ENCODE measurements at regions of chr20 and their contacts with region 1.

Region 1: DNA sequence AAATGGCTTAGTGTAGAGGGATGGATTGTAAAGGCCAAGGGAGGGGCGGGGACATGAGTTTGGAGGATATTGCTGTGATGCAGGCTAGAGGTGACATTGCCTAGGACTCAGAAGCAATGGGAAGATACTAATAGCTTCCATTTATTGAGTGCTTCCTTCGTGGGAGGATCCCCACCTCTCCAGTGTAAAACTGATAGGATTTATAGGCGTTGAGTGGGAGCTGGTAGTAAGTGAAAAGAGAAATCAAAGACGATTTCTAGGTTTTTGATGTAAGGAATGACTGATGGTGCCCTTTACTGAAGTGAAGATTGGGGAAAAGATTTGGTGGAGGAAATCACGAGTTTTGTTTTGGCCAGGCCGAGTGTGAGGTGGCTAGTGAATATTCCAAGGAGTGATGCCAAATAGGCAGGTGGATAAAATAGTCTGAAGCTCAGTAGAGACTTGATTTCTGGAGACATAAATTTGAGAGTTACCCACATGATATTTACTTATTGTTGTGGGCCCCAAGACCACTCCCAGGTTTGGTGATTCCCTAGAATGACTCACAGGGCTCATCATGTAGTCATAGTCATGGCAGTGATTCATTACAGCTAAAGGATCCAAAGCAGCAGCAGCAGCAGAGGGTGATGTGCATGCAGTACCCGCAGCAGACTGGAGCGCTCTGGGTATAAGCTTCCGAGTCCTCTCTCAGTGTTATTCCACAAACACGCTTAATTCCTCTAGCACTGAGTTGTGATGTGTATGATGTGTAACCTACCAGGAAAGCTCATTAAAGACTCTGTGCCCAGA is 10.2 kb downstream of the RPRD1B start:
- DNase-seq: no peak
- H3K4me3 ChIP-seq: no peak overlapping the region
- H3K27ac ChIP-seq: no peak overlapping the region
- H3K27me3 ChIP-seq: no peaks in the 10 kb centered on the region
- CTCF ChIP-seq: no peak

Region 2: DNA sequence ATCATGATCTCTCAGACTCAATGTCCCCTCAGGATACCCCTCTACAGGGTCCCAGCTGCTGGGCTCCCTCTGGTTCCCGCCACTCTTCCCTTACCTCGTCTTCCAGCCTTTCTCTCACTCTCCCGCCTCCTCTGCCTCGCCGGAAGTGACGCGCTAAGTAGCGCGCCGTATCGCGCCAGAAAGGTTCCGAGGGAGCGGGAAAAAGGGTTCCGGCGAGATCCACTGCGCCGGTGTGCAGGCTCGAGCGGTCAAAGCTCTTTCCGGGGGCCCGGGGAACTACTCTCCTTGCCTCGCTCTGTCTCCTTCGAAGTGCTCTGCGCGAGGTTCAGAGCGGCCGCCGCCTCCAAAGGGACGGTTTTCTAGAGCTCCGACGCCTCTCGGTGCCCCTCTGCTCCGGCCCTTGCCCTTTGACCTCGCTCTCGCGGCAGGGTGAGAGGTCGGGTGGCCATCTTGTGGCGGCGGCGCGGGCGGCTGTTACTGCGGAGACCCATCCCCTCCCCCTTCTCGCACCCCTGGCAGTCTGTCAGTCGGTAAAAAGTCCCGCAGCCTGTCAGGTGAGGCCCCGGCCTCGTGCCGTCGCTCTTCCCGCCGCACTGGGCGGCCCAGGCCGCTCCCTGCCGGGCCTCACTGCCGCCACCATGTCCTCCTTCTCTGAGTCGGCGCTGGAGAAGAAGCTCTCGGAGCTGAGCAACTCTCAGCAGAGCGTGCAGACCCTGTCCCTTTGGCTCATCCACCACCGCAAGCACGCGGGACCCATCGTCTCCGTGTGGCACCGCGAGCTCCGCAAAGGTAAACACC is 10.2 kb before region 1 on chr20 and contains the starts of genes RPRD1B and TTI1:
- CTCF ChIA-PET with region 1: interaction called, 6 read pairs
- POLR2A ChIA-PET with region 1: interaction called, 10 read pairs
- DNase-seq: peak; percentile 54
- H3K4me3 ChIP-seq: peak within 1 kb of the TSS; percentile 95
- H3K27ac ChIP-seq: peak within 1 kb of the TSS; percentile 85
- H3K27me3 ChIP-seq: no peaks in the 10 kb centered on the region
- CTCF ChIP-seq: 0 out of 2 replicates have a peak, but pooled peaks have one; percentile 12
- polyA plus RNA-seq, gene RPRD1B: 21.5 and 23.7 TPM in 2 replicates
- polyA plus RNA-seq, gene TTI1: 14.7 and 15.1 TPM in 2 replicates

Region 3: DNA sequence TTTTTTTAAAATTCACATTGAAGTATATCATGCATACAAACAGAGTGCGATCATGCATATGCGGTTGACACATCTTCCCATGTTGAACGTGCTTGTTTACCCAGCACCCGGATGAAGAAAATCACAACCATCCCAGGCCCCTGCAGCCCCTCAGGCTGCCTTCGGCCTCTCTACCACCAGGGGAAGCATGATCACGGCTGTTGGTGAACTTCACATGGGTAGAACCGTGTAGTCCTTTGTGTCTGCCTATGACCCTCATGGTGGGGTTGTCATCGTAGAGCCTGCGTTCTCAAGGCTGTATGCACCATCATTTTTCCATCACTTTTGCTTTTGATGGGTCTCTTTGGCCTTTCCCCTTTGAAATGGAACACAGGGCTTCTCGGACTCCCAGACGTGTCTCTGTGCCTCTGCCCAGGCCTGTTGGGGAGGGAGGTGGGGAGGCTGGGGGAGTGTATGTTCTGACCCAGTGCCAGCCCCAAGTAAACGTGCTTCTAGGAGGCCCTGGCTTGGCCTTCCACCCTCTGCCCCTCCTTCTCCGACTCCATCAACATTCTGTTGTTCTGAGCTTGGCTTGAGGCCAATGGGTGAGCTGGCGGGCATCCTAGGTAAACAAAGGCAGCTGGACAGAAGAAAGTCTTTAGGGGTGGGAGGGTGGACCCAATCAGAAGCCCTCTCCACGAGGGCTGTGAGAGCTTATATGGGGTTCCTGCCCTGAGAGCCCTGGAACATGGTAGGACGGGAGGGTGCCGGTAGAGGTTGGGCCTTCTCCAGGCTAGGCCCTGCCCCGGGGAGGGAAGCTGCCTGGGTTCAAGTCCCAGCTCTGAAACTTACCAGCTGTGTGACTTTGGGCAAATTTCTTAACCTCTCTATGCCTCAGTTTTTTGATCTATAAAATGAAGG is 81.7 kb after region 1 on chr20:
- CTCF ChIA-PET with region 1: no interaction called
- POLR2A ChIA-PET with region 1: no interaction called
- DNase-seq: no peak
- H3K4me3 ChIP-seq: no peak overlapping the region
- H3K27ac ChIP-seq: peak overlapping the region; percentile 12
- H3K27me3 ChIP-seq: no peaks in the 10 kb centered on the region
- CTCF ChIP-seq: peak; percentile 28; the same call in 1 of the 2 replicates

Measured in AG04450 (cell line).